ENCODE measurements at regions of chr17 and their contacts with region 1.

Region 1: DNA sequence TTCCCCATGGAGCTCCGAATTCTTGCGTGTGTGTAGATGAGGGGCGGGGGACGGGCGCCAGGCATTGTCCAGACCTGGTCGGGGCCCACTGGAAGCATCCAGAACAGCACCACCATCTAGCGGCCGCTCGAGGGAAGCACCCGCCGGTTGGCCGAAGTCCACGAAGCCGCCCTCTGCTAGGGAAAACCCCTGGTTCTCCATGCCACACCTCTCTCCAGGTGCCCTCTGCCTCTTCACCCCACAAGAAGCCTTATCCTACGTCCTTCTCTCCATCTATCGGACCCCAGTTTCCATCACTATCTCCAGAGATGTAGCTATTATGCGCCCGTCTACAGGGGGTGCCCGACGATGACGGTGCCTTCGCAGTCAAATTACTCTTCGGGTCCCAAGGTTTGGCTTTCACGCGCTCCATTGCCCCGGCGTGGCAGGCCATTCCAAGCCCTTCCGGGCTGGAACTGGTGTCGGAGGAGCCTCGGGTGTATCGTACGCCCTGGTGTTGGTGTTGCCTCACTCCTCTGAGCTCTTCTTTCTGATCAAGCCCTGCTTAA is 617 bp upstream of the SENP3 start:
- DNase-seq: peak in 1 of 2 experiments; percentile 92
- H3K4me3 ChIP-seq: peak overlapping the region; percentile 69 to 96 (median 78)
- H3K27ac ChIP-seq: peak overlapping the region; percentile 37; the same call in 1 of the 2 replicates
- H3K4me1 ChIP-seq: peaks cover 11 to 40% (median 24%) of the 10 kb centered on the region in 4 experiments
- H3K27me3 ChIP-seq: no peaks in the 10 kb centered on the region
- CTCF ChIP-seq: peak; percentile 86 to 90 (median 87)
- EP300 ChIP-seq: no peak
- POLR2A ChIP-seq: 0 out of 3 replicates have a peak, but pooled peaks of 1 of the 2 experiments have one; percentile 3
- RAD21 ChIP-seq: peak; percentile 83 to 88

Region 2: DNA sequence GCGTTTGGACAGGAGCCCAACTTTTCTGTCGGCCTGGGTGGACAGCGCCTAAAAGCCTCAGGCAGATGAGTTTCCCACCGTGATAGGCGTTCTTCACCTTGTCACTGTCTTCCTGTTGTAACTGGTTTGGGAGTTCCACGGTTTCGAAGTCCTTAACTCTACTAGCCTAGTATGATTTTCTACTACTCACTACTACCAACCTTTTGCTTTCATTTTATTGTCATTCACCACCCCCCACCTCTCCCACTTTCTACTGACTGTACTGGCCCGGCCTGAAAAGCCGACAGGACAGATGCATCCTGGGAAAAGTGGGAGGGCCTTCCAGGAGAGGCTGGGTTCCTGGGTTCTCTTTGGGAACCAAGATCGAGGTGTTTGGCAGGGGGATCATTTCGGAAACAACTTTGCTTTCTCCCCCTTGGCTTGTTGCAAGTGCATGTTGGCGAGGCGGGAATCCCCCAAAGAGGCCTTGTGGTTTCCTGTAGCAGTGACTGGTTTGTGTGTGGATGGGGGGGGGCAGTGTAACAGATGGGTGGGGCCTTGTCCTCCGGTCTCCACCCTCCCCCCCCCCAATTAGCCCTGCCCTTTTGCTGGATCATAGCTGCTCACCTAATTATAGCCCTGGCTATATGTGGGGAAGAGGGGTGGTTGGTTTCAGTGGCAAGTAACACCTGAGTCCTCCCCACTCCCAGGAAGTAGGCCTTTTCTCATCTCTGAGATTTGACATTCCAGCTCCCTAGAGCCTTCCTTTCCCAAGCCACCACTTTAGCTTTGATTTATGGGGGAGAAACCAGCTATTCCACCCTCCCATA is 252.3 kb before region 1 on chr17:
- CTCF ChIA-PET with region 1: interaction called, 5 read pairs
- POLR2A ChIA-PET with region 1: interaction called, 10 read pairs
- DNase-seq: peak in 1 of 2 experiments; percentile 75
- H3K4me3 ChIP-seq: peak overlapping the region; percentile 87 to 97 (median 90)
- H3K27ac ChIP-seq: peak overlapping the region; percentile 92
- H3K4me1 ChIP-seq: peaks cover 0 to 14% (median 6%) of the 10 kb centered on the region in 4 experiments; a peak in 5 of 7 replicates
- H3K27me3 ChIP-seq: no peaks in the 10 kb centered on the region
- CTCF ChIP-seq: no peak
- EP300 ChIP-seq: no peak
- POLR2A ChIP-seq: peak; percentile 50 to 66
- RAD21 ChIP-seq: no peak

Region 3: DNA sequence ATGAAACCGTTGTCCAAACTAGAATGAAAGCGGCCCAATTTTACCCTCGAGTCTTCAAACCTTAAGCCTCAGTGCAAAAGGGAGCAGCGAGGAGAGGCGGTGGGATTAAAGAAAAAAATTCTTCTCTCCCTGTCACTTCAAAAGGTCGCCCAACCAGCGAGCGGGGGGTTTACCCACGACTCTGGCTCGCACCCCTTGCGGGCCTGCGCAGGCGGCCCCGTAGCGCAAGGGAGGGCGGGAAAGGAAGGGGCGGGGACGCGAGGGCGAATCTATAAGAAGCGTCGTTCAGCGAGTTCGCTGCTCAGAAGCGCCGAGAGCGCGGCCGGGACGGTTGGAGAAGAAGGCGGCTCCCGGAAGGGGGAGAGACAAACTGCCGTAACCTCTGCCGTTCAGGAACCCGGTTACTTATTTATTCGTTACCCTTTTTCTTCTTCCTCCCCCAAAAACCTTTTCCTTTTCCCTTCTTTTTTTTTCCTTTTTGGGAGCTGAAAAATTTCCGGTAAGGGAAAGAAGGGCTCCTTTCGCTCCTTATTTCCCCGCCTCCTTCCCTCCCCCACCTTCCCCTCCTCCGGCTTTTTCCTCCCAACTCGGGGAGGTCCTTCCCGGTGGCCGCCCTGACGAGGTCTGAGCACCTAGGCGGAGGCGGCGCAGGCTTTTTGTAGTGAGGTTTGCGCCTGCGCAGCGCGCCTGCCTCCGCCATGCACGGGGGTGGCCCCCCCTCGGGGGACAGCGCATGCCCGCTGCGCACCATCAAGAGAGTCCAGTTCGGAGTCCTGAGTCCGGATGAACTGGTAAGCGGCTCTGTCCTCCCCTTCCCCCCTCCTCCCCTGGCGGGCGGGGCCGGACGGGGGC is 76.8 kb before region 1 on chr17 and contains the start of gene POLR2A:
- CTCF ChIA-PET with region 1: interaction called, 10 read pairs
- POLR2A ChIA-PET with region 1: interaction called, 14 read pairs
- DNase-seq: peak; percentile 93 to 98
- H3K4me3 ChIP-seq: peak within 1 kb of the TSS; percentile 79 to 92 (median 84)
- H3K27ac ChIP-seq: peak within 1 kb of the TSS; percentile 96
- H3K4me1 ChIP-seq: peaks cover 2 to 18% (median 13%) of the 10 kb centered on the region in 4 experiments
- H3K27me3 ChIP-seq: no peaks in the 10 kb centered on the region
- CTCF ChIP-seq: no peak
- EP300 ChIP-seq: peak in 1 of 2 experiments; percentile 95; a peak in 1 of 3 replicates
- POLR2A ChIP-seq: peak; percentile 100
- RAD21 ChIP-seq: no peak
- total RNA-seq, gene POLR2A: 150 and 157 TPM in 2 replicates

Region 4: GRCh38 chr17:7509937-7510336 is 51.2 kb before region 1 on chr17:
- CTCF ChIA-PET with region 1: interaction called, 251 read pairs
- POLR2A ChIA-PET with region 1: interaction called, 17 read pairs
- DNase-seq: no peak
- H3K4me3 ChIP-seq: no peak overlapping the region
- H3K27ac ChIP-seq: no peak overlapping the region
- H3K4me1 ChIP-seq: no peaks in the 10 kb centered on the region
- H3K27me3 ChIP-seq: no peaks in the 10 kb centered on the region
- CTCF ChIP-seq: no peak
- EP300 ChIP-seq: no peak
- POLR2A ChIP-seq: no peak
- RAD21 ChIP-seq: no peak

Region 5: DNA sequence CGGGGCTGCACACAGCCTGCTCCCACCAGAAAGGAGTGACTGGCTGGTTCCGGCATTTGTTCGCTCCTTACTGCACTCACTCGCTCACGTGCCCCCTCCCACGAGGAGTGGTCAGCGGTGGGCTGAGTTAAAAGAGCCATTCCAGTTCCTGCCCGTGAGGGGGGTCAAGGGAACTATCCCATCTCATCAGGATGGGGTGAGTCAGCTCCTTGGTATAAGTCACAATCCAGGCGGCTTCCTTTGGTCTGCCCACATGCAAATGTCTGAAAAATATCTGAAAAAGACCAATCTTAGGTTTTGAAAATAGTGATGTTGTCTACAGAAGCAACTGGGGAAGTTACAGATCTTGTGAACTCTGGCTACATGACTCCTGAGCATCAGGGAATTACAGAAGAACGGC is 22.2 kb before region 1 on chr17:
- CTCF ChIA-PET with region 1: interaction called, 14 read pairs
- POLR2A ChIA-PET with region 1: no interaction called
- DNase-seq: no peak
- H3K4me3 ChIP-seq: no peak overlapping the region
- H3K27ac ChIP-seq: no peak overlapping the region
- H3K4me1 ChIP-seq: no peaks in the 10 kb centered on the region
- H3K27me3 ChIP-seq: no peaks in the 10 kb centered on the region; a peak in 1 of 7 replicates
- CTCF ChIP-seq: no peak
- EP300 ChIP-seq: no peak
- POLR2A ChIP-seq: no peak
- RAD21 ChIP-seq: no peak

Region 6: DNA sequence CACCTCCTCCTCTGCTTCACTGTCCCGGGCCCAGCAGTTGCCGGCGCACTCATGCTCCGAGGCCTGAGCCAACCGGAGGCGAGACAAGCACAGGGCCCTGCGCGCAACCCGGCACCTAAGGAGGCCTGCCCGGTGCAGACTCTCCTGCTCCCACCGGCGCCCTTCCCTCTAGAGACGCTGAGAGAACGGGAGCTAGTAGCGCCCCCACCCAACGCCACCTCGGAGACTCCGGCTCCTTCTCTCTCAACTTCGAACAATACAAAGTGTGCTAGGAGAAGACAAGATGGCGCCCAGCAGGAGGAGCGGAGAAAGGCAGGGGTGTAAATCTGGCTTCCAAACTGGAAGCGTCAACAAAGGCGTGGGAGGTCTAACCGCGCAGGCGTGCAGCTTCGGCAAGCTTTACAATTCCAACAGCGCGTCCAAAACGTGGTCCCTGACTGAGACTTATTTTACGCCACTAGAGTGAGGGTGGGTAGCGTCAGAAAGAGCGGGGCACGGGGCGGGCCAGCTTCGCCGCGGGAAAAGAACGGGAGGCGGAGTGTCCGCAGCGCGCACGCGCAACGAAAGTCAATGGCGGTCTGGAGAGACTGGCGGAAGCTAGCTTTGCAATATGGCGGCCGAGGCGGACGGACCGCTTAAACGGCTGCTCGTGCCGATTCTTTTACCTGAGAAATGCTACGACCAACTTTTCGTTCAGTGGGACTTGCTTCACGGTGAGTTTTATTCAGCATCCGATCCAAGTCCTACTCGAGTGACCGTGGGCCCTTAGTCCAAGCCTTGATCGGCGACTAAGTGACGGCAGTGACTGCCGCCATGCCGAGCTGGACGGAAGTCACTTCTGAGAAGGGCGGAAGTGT is 22.4 kb after region 1 on chr17 and contains the start of gene MPDU1:
- CTCF ChIA-PET with region 1: interaction called, 24 read pairs
- POLR2A ChIA-PET with region 1: interaction called, 1,144 read pairs
- DNase-seq: peak in 1 of 2 experiments; percentile 95
- H3K4me3 ChIP-seq: peak within 1 kb of the TSS; percentile 47 to 95 (median 70)
- H3K27ac ChIP-seq: peak within 1 kb of the TSS; percentile 98
- H3K4me1 ChIP-seq: peaks cover 0 to 19% (median 4%) of the 10 kb centered on the region in 4 experiments; a peak in 6 of 7 replicates
- H3K27me3 ChIP-seq: no peaks in the 10 kb centered on the region
- CTCF ChIP-seq: no peak
- EP300 ChIP-seq: no peak
- POLR2A ChIP-seq: peak; percentile 75 to 94
- RAD21 ChIP-seq: no peak
- total RNA-seq, gene MPDU1: 63.2 and 66.9 TPM in 2 replicates

Region 7: DNA sequence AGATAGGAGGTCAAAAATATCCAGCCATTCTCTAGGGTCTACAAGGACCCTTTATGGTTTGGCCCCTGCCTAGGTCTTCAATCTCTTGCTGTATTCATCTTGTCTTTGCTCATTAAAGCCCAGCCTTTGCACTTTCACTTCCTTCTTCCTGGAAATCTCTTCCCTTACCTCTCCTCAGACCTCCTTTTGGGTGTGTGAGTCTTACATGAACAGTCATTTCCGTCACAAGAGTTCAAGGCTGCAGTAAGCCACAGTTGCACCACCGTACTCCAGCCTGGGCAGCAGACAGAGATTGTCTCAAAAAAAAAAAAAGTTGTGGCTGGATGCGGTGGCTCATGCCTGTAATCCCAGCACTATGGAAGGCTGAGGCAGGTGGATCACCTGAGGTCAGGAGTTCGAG is 83.7 kb after region 1 on chr17:
- CTCF ChIA-PET with region 1: no interaction called
- POLR2A ChIA-PET with region 1: no interaction called
- DNase-seq: no peak
- H3K4me3 ChIP-seq: no peak overlapping the region
- H3K27ac ChIP-seq: no peak overlapping the region
- H3K4me1 ChIP-seq: no peaks in the 10 kb centered on the region
- H3K27me3 ChIP-seq: no peaks in the 10 kb centered on the region; a peak in 2 of 7 replicates
- CTCF ChIP-seq: no peak
- EP300 ChIP-seq: no peak
- POLR2A ChIP-seq: no peak
- RAD21 ChIP-seq: no peak

Measured in H1 (cell line).